Dorsolateral prefrontal cortex (tissue), 120 donors: ENCODE measurements at regions of chr10 and their contacts with region 1.

Region 1: DNA sequence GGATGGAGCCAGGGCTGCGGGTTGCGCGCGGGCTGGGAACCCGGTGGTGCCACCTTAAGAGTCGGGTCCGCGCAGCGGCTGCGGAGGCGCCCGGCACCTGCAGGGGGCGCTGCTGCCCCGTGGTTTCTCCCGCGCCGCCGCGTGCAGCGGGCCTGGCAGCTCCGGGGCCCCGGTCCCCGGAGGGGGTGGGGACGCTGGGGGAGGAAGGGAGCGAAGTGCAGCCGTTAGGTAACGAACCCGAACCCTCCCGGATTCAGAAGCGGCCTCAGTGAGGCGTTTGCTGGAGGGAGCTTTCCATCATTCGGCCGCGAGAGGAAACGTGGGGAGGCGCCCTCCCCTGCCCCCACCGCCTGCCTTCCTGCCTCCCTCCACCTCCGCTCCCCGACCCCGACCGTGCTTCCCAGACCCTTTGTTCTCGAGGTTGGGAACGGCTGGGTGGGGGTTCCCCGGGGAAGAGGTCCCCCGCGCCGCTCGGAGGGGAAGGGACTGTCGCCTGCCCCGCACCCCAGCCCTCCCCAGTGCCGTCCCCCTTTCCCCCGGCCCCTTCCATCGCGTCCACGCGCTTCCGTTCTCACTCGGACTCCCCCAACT is 29.6 kb downstream of the SKIDA1 start:
- DNase-seq: peak; percentile 73 to 94 (median 82)
- H3K4me3 ChIP-seq: peak overlapping the region; percentile 66 to 92 (median 85)
- H3K27ac ChIP-seq: peak overlapping the region in 58 of 59 donors; percentile 24 to 97 (median 90)
- H3K27me3 ChIP-seq: peaks cover 0 to 5% (median 0%) of the 10 kb centered on the region in 45 donors
- CTCF ChIP-seq: peak; percentile 81 to 100 (median 98)

Region 2: GRCh38 chr10:21278491-21279239 is 217.2 kb before region 1 on chr10:
- intact Hi-C with region 1: loop called in 1 of 2 experiments (anchors 10 kb)
- DNase-seq: peak; percentile 39 to 91 (median 76)
- H3K4me3 ChIP-seq: no peak overlapping the region
- H3K27ac ChIP-seq: no peak overlapping the region
- H3K27me3 ChIP-seq: no peaks in the 10 kb centered on the region
- CTCF ChIP-seq: peak; percentile 40 to 79 (median 67)

Region 3: GRCh38 chr10:21724695-21725367 is 229.0 kb after region 1 on chr10:
- intact Hi-C with region 1: loop called in 1 of 2 experiments (anchors 5 kb)
- DNase-seq: peak in 7 of 10 donors; percentile 65 to 88 (median 75)
- H3K4me3 ChIP-seq: peak overlapping the region in 5 of 59 donors; percentile 2 to 28 (median 14)
- H3K27ac ChIP-seq: peak overlapping the region in 9 of 59 donors; percentile 5 to 60 (median 24)
- H3K27me3 ChIP-seq: no peaks in the 10 kb centered on the region
- CTCF ChIP-seq: peak in 8 of 56 donors; percentile 7 to 15 (median 12)

Region 4: GRCh38 chr10:21953585-21954057 is 457.8 kb after region 1 on chr10:
- intact Hi-C with region 1: loop called (anchors 5 to 10 kb)
- DNase-seq: no peak
- H3K4me3 ChIP-seq: no peak overlapping the region
- H3K27ac ChIP-seq: no peak overlapping the region
- H3K27me3 ChIP-seq: no peaks in the 10 kb centered on the region
- CTCF ChIP-seq: peak in 53 of 56 donors; percentile 1 to 66 (median 43)

Region 5: GRCh38 chr10:22325272-22326144 is 829.7 kb after region 1 on chr10:
- intact Hi-C with region 1: loop called in 1 of 2 experiments (anchors 10 kb)
- DNase-seq: peak in 8 of 10 donors; percentile 40 to 78 (median 64)
- H3K4me3 ChIP-seq: peak overlapping the region; percentile 49 to 92 (median 72)
- H3K27ac ChIP-seq: peak overlapping the region; percentile 13 to 94 (median 81)
- H3K27me3 ChIP-seq: no peaks in the 10 kb centered on the region
- CTCF ChIP-seq: peak in 7 of 56 donors; percentile 5 to 21 (median 10)

Region 6: GRCh38 chr10:23067939-23068775 is 1572.3 kb after region 1 on chr10:
- intact Hi-C with region 1: loop called in 1 of 2 experiments (anchors 10 kb)
- DNase-seq: peak; percentile 63 to 89 (median 80)
- H3K4me3 ChIP-seq: no peak overlapping the region
- H3K27ac ChIP-seq: peak overlapping the region in 23 of 59 donors; percentile 2 to 79 (median 40)
- H3K27me3 ChIP-seq: no peaks in the 10 kb centered on the region
- CTCF ChIP-seq: peak; percentile 65 to 96 (median 85)